ENCODE measurements at regions of chr18 and their contacts with region 1.

Region 1: DNA sequence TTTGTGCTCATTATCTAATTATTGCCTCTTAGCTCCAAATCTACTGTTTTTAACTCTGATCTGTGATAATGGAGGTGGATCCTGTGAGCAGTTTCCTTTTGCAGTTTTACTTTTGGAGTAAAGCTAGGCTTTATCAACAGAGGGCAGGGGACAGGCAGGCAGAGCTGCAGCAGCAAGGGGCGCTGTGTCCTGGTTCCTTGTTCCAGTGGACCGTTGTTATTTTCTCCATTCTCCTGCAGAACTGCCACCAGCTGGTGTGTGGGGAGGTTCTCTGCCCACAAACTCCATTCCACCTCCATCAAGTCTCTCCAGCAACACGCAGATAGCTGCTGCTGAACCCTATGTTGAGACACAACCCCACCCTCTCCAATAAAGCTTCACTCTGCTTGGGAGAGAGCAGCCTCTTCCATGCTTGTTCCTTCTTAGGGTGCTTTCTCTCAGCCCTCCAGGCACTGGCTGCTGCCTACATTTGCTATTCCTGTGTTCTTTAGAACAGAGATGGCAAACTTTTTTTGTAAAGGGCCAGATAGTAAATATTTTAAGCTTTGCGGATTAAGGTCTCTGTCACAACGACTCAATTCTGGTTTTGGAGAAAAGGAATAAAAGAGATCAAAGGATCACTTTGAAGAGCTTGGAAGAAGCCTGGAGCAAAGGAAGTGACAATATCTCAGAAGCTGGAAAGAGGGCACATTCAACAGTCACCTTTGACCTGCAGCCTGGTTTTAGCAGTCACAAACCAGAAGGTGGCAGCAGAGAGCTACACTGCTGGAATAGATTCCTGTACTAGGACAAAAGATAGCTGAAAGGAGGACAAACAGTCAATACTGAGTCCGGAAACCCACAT is 208.8 kb downstream of the CCDC178 start:
- ATAC-seq: peak; percentile 58 to 86 (median 79)
- H3K4me3 ChIP-seq: no peak overlapping the region
- H3K27ac ChIP-seq: no peak overlapping the region
- H3K4me1 ChIP-seq: peaks cover 0 to 3% of the 10 kb centered on the region in 2 donors

Region 2: GRCh38 chr18:33495278-33495677 is 263.6 kb after region 1 on chr18:
- in situ Hi-C with region 1: loop called in 2 of 9 experiments (anchors 25 kb)
- ATAC-seq: peak; percentile 56 to 98 (median 84)
- H3K4me3 ChIP-seq: no peak overlapping the region
- H3K27ac ChIP-seq: no peak overlapping the region
- H3K4me1 ChIP-seq: no peaks in the 10 kb centered on the region

Region 3: DNA sequence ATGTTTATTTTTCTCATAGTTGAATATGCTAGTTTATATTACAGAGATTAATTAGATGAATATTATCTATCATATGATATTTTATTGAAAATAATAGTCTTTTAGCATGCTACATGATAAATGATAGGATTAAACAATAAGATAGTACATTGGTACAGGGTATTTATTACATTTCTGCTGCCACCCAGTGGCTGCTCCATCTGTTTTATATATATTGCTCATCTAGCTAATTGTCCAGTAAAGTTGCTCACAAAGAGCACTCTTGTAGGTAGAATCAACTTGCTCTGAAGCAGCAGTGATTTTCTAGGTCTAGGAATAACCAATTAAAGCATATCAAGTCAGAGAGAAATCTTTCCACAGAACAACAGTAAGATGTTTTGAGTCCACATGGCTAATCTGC is 529.7 kb after region 1 on chr18:
- in situ Hi-C with region 1: loop called in 2 of 9 experiments (anchors 25 kb)
- ATAC-seq: peak in 4 of 8 experiments; percentile 46 to 73 (median 58)
- H3K4me3 ChIP-seq: no peak overlapping the region
- H3K27ac ChIP-seq: no peak overlapping the region
- H3K4me1 ChIP-seq: no peaks in the 10 kb centered on the region